Mucosa of descending colon (tissue), 3 donors: ENCODE measurements at regions of chr5 and their contacts with region 1.

Region 1: DNA sequence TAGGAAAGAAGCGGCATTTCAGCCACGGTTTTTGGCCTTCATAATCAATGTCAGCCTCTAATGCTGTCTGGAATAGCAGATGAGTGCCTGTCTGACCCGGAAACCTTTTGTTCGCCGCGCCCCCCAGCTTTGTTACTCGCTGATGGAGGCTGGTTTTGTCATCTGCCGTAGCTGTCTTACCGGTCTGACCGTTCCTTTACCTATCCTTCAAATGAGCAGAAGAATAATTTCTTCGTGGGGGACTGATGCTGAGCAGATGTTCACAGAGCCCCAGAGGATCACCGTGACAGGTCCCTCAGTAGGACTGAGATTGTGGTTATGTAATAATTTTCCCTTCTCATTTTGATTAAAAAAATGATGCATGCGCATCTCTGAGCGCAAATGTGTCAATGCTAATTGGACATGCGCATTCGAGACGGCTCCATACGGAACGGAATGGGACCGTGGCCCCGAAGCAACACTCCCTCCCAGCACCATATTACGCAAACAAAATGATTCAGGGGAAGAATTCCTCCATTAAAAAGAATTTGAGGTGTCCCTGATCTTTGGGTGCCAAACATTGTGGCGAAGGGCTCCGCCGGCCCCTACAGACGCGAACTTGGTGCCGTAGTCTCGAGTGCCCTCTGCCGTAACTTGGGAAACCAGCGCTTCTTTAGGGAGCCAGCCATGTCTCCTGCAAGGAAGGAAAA is 27.6 kb downstream of the TLX3 start:
- DNase-seq: peak in 2 of 3 donors; percentile 39 to 49
- ATAC-seq: peak; percentile 59
- H3K4me3 ChIP-seq: no peak overlapping the region
- H3K4me1 ChIP-seq: no peaks in the 10 kb centered on the region
- CTCF ChIP-seq: no peak

Region 2: GRCh38 chr5:171207256-171207847 is 129.3 kb before region 1 on chr5:
- intact Hi-C with region 1: loop called in 1 of 2 experiments (anchors 10 kb)
- DNase-seq: peak in 1 of 3 donors; percentile 20
- ATAC-seq: no peak
- H3K4me3 ChIP-seq: no peak overlapping the region
- H3K4me1 ChIP-seq: no peaks in the 10 kb centered on the region
- CTCF ChIP-seq: no peak

Region 3: GRCh38 chr5:171494452-171495121 is 157.9 kb after region 1 on chr5:
- intact Hi-C with region 1: no loop called
- DNase-seq: peak in 2 of 3 donors; percentile 24 to 29
- ATAC-seq: peak; percentile 62
- H3K4me3 ChIP-seq: no peak overlapping the region
- H3K4me1 ChIP-seq: no peaks in the 10 kb centered on the region
- CTCF ChIP-seq: no peak